B cell (primary cell): ENCODE measurements at regions of chr17 and their contacts with region 1.

Region 1: DNA sequence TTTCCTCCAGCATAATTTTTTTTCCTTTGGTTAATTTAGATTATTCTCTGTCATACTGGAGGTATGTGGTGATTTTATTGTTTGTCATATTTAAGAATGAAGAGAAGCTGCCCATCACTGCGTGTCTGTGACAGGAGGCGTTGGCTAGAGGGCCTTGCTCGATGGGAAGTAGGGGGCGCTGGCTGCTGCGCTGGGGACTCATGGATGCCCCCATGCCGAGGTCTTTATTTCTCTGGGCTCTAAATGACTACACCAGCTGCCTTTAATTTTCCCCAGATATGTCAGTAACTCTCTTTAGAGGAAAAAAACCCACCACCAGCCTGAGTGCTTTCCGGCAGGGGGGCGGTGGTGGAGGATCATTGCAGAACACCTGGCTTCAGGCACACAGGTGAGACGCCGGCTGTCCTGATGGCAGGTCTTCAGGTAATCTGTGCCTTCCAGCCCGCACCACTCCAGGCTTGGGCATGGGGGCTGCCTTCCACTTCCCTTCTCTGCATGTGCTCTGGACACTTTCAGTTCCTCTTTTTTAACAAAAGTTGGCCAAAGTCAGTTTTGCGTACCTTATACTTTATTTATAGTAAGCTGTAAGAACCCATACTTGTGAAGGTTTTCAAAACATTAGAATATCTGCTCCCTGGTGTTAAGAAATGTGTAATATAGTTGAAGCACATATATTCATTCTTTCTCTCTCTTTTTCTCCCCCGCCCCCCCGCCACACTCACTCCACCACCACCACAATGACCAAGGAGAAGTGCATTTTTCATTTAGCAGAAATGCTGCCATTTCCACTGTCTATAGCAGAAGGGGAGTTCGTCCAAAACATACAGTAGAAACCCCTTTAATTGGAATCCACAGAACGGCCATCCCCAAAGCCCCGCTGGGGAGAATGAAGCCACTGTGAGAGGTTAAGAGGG is 192.7 kb downstream of the RPTOR start:
- DNase-seq: peak; percentile 86
- ATAC-seq: peak; percentile 86
- H3K4me3 ChIP-seq: peak overlapping the region in 3 of 5 experiments; percentile 17 to 41 (median 23)
- H3K4me3 Mint-ChIP-seq: peak overlapping the region; percentile 82
- H3K27ac ChIP-seq: peak overlapping the region; percentile 78
- H3K27ac Mint-ChIP-seq: peak overlapping the region; percentile 93
- H3K4me1 ChIP-seq: peaks cover 41 to 44% of the 10 kb centered on the region in 2 donors
- H3K4me1 Mint-ChIP-seq: peaks cover 55% of the 10 kb centered on the region
- H3K27me3 ChIP-seq: no peaks in the 10 kb centered on the region
- H3K27me3 Mint-ChIP-seq: no peaks in the 10 kb centered on the region
- CTCF ChIP-seq: peak; percentile 5

Region 2: DNA sequence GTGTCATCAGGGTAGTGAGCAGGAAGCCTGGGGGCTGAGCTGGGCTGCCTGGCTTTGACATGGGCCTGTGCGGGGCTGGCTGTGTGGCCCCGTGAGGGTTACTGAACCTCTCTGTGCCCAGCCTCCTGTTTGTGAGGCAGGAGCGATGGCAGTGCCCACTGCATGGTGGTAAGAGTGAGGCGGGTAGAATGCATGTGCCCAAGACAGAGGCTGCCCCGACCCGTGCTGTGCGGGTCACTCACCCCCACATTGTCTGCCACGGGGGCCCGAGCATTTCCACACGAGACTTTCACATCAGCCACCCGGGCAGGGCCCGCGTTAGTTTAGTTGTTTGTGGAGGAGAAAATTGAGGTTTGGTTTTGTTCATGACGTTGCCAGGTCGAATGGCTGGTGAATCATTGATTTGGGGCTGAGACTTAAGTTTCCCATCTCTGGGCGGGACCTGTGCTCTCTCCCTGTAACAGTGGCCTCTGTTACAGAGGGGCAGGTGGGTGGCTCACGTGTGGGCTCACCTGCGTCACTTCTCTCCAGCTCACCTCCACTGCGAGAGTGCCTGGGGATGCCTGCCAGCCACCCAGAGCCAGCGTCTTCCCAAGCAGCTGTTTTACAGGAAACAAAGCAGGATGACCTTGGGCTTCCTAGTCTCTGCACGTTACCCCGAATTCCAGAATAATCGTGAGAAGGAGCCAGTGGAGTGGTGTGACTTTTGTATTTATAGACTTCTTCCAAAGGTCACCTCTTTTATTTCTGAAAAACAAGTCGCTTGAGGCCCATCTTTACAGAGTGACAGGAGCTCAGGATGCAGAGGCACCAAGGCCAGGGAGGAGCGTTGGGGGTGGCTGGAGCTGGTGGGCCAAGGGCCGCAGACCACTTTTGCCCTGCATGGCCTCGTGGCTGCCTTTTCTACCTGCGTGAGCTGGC is 42.1 kb before region 1 on chr17:
- CTCF ChIA-PET with region 1: no interaction called
- POLR2A ChIA-PET with region 1: no interaction called
- intact Hi-C with region 1: no loop called
- DNase-seq: no peak
- ATAC-seq: no peak
- H3K4me3 ChIP-seq: no peak overlapping the region
- H3K4me3 Mint-ChIP-seq: no peak overlapping the region
- H3K27ac ChIP-seq: no peak overlapping the region
- H3K27ac Mint-ChIP-seq: no peak overlapping the region
- H3K4me1 ChIP-seq: peaks cover 0 to 4% of the 10 kb centered on the region in 2 donors
- H3K4me1 Mint-ChIP-seq: peaks cover 11% of the 10 kb centered on the region
- H3K27me3 ChIP-seq: no peaks in the 10 kb centered on the region
- H3K27me3 Mint-ChIP-seq: no peaks in the 10 kb centered on the region
- CTCF ChIP-seq: no peak

Region 3: DNA sequence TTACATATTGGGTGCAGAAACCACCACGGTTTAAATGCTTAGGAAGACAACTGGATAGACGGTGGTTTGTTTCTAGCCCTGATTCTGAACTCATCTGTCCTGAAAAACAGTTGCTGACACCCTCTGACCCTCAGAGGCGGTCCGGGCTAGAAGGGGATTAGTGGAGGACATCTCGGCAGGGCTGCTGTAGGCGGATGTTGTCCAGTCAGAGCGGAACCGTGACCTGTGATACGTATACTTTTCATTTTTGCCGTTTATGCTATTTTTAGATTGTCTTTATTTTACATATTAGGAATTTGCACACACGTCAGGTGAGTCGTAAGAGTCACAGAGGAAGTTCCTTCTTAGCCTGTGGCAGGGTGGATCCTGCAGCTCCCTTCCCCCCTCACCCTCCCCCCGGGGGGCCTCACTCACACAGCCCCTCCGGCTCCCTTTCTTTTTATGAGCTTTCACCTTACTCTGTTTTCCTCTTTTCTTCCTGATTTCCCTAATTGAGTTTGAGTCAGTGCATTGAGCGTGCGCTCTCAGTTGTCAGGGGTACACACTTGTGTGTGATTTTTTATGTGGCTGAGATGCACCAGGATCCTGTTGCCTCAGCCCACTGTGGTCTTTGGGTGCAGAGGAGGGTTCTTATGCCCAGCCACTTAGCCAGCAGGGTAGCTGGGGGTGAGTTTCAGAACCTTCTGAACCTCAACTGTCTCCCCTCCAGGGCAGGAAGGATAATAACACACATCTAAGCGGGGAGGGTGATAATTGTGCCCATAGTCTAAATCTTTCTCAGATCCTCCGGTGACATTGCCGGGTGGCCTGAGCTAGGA is 43.2 kb after region 1 on chr17:
- CTCF ChIA-PET with region 1: interaction called, 3 read pairs
- POLR2A ChIA-PET with region 1: no interaction called
- intact Hi-C with region 1: loop called (anchors 5 kb)
- DNase-seq: peak; percentile 63
- ATAC-seq: peak; percentile 74
- H3K4me3 ChIP-seq: peak overlapping the region in 3 of 5 experiments; percentile 16 to 38 (median 32)
- H3K4me3 Mint-ChIP-seq: peak overlapping the region; percentile 51
- H3K27ac ChIP-seq: peak overlapping the region in 1 of 2 donors; percentile 66
- H3K27ac Mint-ChIP-seq: peak overlapping the region; percentile 62
- H3K4me1 ChIP-seq: peaks cover 20 to 35% of the 10 kb centered on the region in 2 donors
- H3K4me1 Mint-ChIP-seq: peaks cover 24% of the 10 kb centered on the region
- H3K27me3 ChIP-seq: no peaks in the 10 kb centered on the region
- H3K27me3 Mint-ChIP-seq: no peaks in the 10 kb centered on the region
- CTCF ChIP-seq: no peak

Region 4: DNA sequence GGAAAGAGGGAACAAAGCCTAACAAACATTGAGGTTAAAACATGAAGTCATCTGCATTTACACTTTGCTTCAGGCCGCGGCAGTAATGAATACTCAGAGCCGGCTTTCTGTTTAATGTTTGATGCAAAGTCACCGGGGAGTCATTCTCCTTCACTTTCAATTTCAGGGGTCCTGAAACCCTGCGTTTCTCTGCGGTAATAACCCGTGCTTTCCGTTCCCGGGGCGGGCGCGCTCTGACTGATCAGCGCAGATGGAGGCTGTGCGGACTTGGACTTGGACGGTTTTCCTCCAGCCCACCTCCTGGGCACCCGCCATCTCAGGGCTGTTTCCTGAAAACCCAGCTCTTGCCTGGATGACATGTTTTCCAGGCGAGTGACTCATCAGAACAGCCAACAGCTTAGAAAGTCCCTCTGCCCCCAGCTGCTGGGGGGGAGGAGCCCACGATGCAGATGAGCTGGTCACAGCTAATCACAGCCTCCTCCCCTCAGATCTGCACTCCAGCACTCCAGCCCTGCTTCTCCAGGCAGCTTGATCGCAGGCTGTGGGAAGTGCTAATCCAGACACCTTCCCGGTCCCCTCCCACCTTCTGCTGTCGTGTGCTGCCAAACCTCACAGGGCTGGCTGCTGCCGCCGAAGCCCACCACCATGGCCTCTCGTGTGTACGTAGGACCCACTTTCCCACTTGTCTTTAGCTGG is 95.7 kb after region 1 on chr17:
- CTCF ChIA-PET with region 1: interaction called, 4 read pairs
- POLR2A ChIA-PET with region 1: interaction called, 5 read pairs
- intact Hi-C with region 1: loop called (anchors 5 kb)
- DNase-seq: peak; percentile 89
- ATAC-seq: peak; percentile 90
- H3K4me3 ChIP-seq: peak overlapping the region; percentile 51 to 73 (median 66)
- H3K4me3 Mint-ChIP-seq: peak overlapping the region; percentile 95
- H3K27ac ChIP-seq: peak overlapping the region; percentile 82 to 96
- H3K27ac Mint-ChIP-seq: peak overlapping the region; percentile 98
- H3K4me1 ChIP-seq: peaks cover 12 to 17% of the 10 kb centered on the region in 2 donors
- H3K4me1 Mint-ChIP-seq: peaks cover 23% of the 10 kb centered on the region
- H3K27me3 ChIP-seq: no peaks in the 10 kb centered on the region
- H3K27me3 Mint-ChIP-seq: no peaks in the 10 kb centered on the region
- CTCF ChIP-seq: no peak

Region 5: DNA sequence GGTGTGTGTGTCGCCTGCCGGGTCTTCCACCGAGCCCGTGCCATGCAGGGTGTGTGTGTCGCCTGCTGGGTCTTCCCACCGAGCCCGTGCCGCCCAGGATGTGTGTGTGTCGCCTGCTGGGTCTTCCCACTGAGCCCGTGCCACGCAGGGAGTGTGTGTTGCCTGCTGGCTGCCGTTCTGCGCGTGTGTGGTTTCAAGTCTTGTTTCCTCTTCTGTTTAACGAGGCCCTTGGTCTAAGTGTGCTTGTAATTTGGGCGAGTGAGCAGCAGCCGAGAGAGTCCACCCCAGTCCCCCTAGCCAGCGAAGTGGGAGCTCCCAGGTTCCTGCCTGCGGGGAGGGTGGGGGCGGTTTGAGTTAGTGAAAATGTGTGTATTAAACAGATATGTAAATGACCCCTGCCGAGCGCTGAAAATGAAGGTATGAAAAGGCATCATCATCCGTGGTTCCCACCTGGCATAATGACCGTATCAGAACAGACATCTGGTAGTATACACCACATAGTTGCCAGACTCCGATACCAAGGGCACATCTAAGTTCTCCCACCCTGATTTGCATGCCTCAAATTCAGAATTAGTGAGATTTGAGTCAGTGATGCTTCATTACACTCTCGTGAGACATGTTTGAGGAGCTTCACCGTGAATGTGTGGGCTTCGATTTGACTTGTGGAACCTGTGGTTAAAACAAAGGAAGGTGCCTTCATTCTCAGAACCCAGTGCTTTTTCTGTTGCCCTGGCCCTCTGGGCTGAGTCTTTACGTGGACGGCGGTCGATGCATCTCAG is 139.8 kb after region 1 on chr17:
- CTCF ChIA-PET with region 1: no interaction called
- POLR2A ChIA-PET with region 1: no interaction called
- intact Hi-C with region 1: loop called (anchors 1 kb)
- DNase-seq: peak; percentile 71
- ATAC-seq: peak; percentile 87
- H3K4me3 ChIP-seq: peak overlapping the region in 4 of 5 experiments; percentile 2 to 55 (median 40)
- H3K4me3 Mint-ChIP-seq: peak overlapping the region; percentile 89
- H3K27ac ChIP-seq: peak overlapping the region; percentile 55 to 66
- H3K27ac Mint-ChIP-seq: peak overlapping the region; percentile 91
- H3K4me1 ChIP-seq: peaks cover 28% of the 10 kb centered on the region in 2 donors
- H3K4me1 Mint-ChIP-seq: peaks cover 28% of the 10 kb centered on the region
- H3K27me3 ChIP-seq: no peaks in the 10 kb centered on the region
- H3K27me3 Mint-ChIP-seq: no peaks in the 10 kb centered on the region
- CTCF ChIP-seq: no peak

Region 6: DNA sequence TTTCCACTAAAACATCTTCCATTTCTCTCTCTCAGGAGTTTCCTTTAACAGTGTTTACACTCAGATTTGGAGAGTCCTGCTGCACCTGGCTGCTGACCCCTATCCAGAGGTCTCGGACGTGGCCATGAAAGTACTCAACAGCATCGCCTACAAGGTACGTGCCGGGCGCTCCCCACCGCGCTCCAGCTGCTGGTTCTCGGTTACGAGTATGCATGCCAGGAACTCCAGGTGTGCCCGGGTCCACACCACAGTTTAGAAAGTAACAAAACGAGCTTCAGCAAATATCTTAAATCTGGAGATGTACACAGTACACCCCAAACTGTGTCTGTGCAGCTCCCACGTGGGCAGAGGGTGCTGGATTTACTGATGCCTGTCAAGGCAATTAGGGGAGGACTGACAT is 171.4 kb after region 1 on chr17:
- CTCF ChIA-PET with region 1: interaction called, 3 read pairs
- POLR2A ChIA-PET with region 1: no interaction called
- intact Hi-C with region 1: loop called (anchors 1 kb)
- DNase-seq: no peak
- ATAC-seq: no peak
- H3K4me3 ChIP-seq: no peak overlapping the region
- H3K4me3 Mint-ChIP-seq: no peak overlapping the region
- H3K27ac ChIP-seq: peak overlapping the region in 1 of 2 donors; percentile 100
- H3K27ac Mint-ChIP-seq: peak overlapping the region; percentile 68
- H3K4me1 ChIP-seq: peaks cover 50 to 57% of the 10 kb centered on the region in 2 donors
- H3K4me1 Mint-ChIP-seq: peaks cover 46% of the 10 kb centered on the region
- H3K27me3 ChIP-seq: no peaks in the 10 kb centered on the region
- H3K27me3 Mint-ChIP-seq: no peaks in the 10 kb centered on the region
- CTCF ChIP-seq: no peak

Region 7: GRCh38 chr17:80981062-80981902 is 243.9 kb after region 1 on chr17:
- CTCF ChIA-PET with region 1: no interaction called
- POLR2A ChIA-PET with region 1: no interaction called
- intact Hi-C with region 1: loop called (anchors 10 kb)
- DNase-seq: peak; percentile 67
- ATAC-seq: peak; percentile 72
- H3K4me3 ChIP-seq: peak overlapping the region in 2 of 5 experiments; percentile 2 to 23
- H3K4me3 Mint-ChIP-seq: peak overlapping the region; percentile 69
- H3K27ac ChIP-seq: no peak overlapping the region
- H3K27ac Mint-ChIP-seq: no peak overlapping the region
- H3K4me1 ChIP-seq: peaks cover 12 to 17% of the 10 kb centered on the region in 2 donors
- H3K4me1 Mint-ChIP-seq: peaks cover 12% of the 10 kb centered on the region
- H3K27me3 ChIP-seq: no peaks in the 10 kb centered on the region
- H3K27me3 Mint-ChIP-seq: peaks cover 9% of the 10 kb centered on the region
- CTCF ChIP-seq: peak; percentile 94